ENCODE measurements at regions of chr1 and their contacts with region 1.

Region 1: DNA sequence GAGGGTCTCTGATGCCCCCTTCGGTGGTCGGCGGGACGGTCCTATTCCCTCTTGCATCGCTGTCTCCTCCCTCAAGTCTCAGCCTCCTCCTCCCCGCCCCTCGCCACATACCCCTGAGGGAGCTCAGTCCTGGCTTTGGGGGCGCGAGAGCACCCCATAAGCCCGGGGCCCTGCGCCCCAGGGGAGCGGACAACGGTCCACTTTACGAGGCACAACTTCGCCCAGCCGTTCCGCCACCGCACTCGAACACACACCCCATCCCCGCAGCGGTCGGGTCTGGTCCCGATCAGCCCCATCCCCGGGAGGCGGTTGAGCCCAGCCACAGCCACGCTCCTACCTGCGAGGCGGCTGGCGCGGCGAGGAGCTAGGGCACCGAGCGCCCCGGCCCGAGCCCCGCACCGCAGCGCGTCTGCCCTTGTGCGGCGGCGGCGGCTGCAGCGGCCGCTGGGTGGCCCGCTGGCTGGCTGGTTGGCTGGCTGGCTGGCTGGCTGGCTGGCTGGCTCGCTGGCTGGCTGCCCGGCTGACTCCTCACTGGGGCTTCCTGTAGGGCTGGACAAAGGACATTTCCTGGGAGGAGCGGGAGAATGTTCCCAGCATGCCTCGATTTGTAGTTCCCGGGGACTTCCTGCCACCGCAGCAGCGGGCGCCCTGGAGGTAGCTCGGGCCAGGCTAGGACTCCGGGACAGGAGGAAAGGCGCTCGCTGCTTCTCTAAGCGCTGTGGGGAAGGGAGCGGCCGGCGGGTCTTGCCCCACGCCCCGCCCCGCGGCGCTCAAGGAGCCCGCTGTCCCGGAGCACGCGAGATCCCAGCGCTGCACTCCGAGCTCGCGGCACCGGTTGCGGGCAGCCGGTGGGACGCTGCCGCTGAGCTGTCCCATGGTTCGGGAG is at the start of gene ZNF697:
- H3K4me3 ChIP-seq: peak within 1 kb of the TSS; percentile 89
- H3K27ac ChIP-seq: peak within 1 kb of the TSS; percentile 90
- H3K4me1 ChIP-seq: no peaks in the 10 kb centered on the region
- CTCF ChIP-seq: peak; percentile 92

Region 2: GRCh38 chr1:119631433-119632102 is 16.4 kb before region 1 on chr1:
- CTCF ChIA-PET with region 1: interaction called, 11 read pairs
- POLR2A ChIA-PET with region 1: interaction called, 36 read pairs
- H3K4me3 ChIP-seq: peak overlapping the region; percentile 12; the same call in 1 of the 2 replicates
- H3K27ac ChIP-seq: no peak overlapping the region; the same call in 1 of the 2 replicates
- H3K4me1 ChIP-seq: peaks cover 16% of the 10 kb centered on the region
- CTCF ChIP-seq: no peak

Region 3: DNA sequence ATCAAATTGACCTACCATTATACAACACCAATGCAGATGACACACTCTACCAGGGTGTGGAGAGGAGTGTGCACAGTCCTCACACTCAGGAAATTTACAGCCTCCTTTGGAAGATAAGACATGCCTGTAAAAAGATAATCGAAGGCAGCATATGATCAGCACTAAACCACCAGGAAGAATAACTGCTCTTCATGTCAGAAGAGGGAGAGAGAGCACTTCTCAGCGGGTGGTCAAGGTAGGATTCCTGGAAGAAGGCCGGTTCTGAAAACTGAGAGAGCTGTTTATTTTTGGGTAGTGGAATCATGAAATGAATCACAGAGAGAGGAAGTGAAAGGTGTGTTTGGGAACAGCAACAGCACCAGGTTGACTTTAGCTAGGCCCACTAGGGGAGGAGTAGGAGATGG is 14.1 kb after region 1 on chr1:
- CTCF ChIA-PET with region 1: interaction called, 19 read pairs
- POLR2A ChIA-PET with region 1: interaction called, 30 read pairs
- H3K4me3 ChIP-seq: no peak overlapping the region
- H3K27ac ChIP-seq: no peak overlapping the region
- H3K4me1 ChIP-seq: no peaks in the 10 kb centered on the region
- CTCF ChIP-seq: no peak

Region 4: DNA sequence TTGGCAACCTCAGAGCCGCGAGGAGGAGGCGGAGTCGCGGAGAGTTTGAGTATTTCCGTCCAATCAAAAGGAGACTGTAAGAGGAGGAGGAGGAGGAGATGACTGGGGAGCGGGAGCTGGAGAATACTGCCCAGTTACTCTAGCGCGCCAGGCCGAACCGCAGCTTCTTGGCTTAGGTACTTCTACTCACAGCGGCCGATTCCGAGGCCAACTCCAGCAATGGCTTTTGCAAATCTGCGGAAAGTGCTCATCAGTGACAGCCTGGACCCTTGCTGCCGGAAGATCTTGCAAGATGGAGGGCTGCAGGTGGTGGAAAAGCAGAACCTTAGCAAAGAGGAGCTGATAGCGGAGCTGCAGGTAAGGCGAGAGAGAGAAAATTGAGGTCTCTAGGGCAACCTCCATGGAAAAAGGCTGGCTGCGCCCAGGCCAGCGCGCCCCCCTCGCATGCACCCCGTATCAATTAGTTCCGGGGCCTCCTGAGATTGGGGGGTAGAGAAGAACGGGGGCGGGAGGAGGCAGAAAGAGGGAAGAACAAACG is 63.9 kb after region 1 on chr1 and contains the start of gene PHGDH:
- CTCF ChIA-PET with region 1: no interaction called
- POLR2A ChIA-PET with region 1: interaction called, 23 read pairs
- H3K4me3 ChIP-seq: peak within 1 kb of the TSS; percentile 76
- H3K27ac ChIP-seq: peak within 1 kb of the TSS; percentile 90
- H3K4me1 ChIP-seq: peaks cover 15% of the 10 kb centered on the region
- CTCF ChIP-seq: no peak

Measured in HEK293 (cell line).